ENCODE measurements at regions of chr10 and their contacts with region 1.

Region 1: GRCh38 chr10:119903946-119904666 is 11.6 kb downstream of the SEC23IP start:
- DNase-seq: no peak
- H3K4me3 ChIP-seq: no peak overlapping the region
- H3K27ac ChIP-seq: no peak overlapping the region
- H3K4me1 ChIP-seq: peaks cover 0 to 2% of the 10 kb centered on the region in 2 donors
- H3K27me3 ChIP-seq: no peaks in the 10 kb centered on the region
- CTCF ChIP-seq: no peak
- POLR2A ChIP-seq: no peak

Region 2: DNA sequence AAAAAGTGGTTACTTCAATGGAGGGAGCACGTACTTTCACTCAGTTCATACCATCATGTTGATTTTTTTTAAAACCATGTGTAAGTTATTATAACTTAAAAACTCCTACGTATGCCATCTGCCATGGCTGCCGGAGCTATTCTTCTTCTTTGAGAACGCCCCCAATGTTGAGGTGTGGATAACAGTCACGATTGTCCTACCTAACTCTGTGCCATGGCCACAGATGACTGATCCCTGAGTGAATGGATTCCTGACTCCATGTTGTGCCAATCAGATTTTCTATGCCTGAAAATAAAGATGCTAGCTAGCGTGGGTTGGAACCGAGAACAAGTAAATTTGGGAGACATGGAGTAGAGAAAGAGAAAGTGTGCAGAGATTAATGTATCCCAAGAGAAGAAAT is 36.8 kb before region 1 on chr10:
- intact Hi-C with region 1: loop called (anchors 5 kb)
- DNase-seq: no peak
- H3K4me3 ChIP-seq: no peak overlapping the region
- H3K27ac ChIP-seq: no peak overlapping the region
- H3K4me1 ChIP-seq: peaks cover 11 to 13% of the 10 kb centered on the region in 2 donors
- H3K27me3 ChIP-seq: no peaks in the 10 kb centered on the region
- CTCF ChIP-seq: no peak
- POLR2A ChIP-seq: no peak